ENCODE measurements at regions of chr21 and their contacts with region 1.

Region 1: DNA sequence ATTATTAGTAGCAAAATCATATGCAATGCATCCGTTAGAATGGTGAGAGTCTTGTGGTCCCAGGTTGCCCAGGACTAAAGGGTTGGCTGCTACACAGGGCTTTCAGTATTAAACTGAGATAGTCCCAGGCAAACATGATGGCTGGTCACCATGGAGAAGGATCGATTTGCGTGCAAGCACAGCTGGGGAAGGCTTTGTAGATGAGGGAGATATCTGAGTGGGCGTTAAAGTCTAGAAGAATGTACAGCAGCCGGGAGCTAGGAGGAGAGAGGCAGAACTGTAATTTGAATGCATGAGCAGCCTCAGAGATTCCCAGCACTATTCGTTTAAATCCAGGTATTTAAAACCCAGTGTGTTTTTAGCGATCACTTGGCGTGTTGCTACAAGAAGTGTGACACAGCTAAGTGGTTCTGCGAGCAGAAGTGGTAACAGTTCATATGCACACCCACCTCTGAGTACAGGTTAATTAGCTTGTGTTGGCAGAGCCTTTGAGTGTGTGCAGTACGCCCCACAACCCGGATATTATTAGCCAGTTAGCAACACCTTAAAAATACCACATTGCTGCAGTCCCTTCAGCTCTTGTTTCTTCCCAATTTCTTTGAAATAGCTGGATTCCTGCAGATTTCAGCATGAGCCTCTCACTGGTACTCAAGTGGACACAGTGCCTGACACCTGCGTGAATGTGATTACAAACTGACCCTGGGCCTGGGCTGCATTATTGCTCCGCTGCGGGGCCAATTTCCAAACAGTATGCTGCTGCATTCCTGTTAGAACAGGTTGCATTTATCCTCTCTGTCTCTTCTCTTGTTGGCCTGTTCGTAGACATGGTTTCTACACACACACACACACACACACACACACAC is 67.2 kb upstream of the SCAF4 start:
- DNase-seq: no peak
- H3K4me3 ChIP-seq: no peak overlapping the region
- H3K27ac ChIP-seq: peak overlapping the region in 30 of 59 donors; percentile 2 to 72 (median 50)
- H3K27me3 ChIP-seq: no peaks in the 10 kb centered on the region
- CTCF ChIP-seq: no peak

Region 2: DNA sequence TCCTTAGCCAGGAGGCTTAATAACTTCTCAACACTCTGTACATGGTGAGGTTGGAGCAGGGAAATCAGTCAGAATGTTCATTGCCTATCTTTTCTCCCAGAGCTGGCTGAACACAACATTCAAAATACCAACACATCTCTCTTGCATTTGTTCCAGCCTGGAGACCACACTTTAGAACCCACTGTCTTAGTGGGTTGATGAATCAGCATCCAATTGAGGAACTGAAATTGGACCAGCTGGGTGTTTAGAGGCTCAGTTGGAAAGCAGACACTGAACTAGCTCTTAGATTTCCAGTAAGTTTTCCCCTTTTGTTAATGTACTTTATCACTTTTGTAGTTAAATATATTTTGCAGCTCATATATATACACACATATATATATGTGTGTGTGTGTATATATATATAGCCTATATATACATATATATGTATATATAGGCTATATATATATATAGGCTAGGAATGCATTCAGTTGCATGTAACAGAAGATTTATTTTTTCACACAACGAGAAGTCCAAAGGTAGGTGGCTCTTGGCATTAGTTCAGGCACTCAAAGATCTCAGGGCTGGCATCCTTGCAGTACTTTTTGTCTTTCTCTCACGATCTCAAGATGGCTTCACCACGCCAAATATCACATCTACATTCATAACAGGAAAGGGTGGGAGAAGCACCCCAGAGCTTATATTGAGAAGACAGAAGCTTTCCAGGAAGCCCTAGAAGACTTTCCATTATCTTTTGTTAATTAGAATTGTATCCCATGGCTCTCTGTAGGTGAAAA is 38.7 kb after region 1 on chr21:
- intact Hi-C with region 1: loop called in 1 of 2 experiments (anchors 2 kb)
- DNase-seq: peak in 1 of 10 donors; percentile 28
- H3K4me3 ChIP-seq: no peak overlapping the region
- H3K27ac ChIP-seq: peak overlapping the region in 34 of 59 donors; percentile 1 to 82 (median 42)
- H3K27me3 ChIP-seq: no peaks in the 10 kb centered on the region
- CTCF ChIP-seq: no peak

Region 3: DNA sequence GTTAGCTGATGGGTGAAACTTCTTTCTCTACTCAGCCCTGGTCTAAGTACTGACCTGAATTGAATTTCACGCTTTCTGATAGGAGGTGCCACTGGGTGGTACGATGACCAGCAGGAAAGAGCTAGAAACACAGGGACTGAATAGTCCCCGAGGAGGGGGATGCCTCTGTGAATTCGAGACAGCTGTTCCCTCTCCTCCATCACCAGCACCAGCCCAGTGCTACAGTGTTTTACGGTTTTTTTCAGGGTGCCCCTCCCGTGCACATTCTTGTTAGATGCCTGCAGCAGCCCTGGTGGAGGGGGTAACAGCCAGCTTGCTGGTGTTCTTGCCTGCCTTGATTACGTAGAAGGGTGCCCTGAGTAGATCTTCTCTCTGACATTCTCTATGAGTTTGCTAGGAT is 80.8 kb after region 1 on chr21:
- intact Hi-C with region 1: loop called in 1 of 2 experiments (anchors 5 kb)
- DNase-seq: no peak
- H3K4me3 ChIP-seq: no peak overlapping the region
- H3K27ac ChIP-seq: peak overlapping the region in 1 of 59 donors; percentile 1
- H3K27me3 ChIP-seq: peaks cover 0 to 8% (median 0%) of the 10 kb centered on the region in 45 donors
- CTCF ChIP-seq: no peak

Measured in dorsolateral prefrontal cortex (tissue), 120 donors.